Right ventricle myocardium superior (tissue), 1 donor: ENCODE measurements at regions of chr7 and their contacts with region 1.

Region 1: GRCh38 chr7:151315038-151315655 is 26.5 kb upstream of the NUB1 start:
- DNase-seq: peak; percentile 48
- ATAC-seq: peak; percentile 86

Region 2: DNA sequence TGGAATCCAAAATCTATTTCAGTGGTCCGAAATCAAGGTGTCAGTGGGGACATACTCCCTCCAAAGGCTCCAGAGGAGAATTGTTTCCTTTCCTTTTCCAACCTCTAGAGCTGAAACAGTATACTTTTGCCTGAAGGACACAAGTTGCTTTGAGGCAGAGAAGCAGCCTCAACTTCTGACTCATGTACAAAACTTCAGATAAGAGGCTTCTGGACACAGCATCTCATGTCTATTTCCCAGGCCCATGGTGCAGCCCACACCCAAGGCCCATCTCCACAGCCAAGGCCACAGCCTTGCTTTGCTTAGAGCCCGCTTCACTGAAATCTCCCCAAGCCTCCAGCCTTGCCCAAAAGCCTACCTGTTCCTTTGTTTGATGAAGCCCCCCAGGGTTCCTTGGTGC is 1610.6 kb before region 1 on chr7:
- intact Hi-C with region 1: no loop called
- DNase-seq: no peak
- ATAC-seq: no peak

Region 3: GRCh38 chr7:151351027-151351426 is 35.9 kb after region 1 on chr7:
- intact Hi-C with region 1: loop called (anchors 2 kb)
- DNase-seq: no peak
- ATAC-seq: no peak

Region 4: DNA sequence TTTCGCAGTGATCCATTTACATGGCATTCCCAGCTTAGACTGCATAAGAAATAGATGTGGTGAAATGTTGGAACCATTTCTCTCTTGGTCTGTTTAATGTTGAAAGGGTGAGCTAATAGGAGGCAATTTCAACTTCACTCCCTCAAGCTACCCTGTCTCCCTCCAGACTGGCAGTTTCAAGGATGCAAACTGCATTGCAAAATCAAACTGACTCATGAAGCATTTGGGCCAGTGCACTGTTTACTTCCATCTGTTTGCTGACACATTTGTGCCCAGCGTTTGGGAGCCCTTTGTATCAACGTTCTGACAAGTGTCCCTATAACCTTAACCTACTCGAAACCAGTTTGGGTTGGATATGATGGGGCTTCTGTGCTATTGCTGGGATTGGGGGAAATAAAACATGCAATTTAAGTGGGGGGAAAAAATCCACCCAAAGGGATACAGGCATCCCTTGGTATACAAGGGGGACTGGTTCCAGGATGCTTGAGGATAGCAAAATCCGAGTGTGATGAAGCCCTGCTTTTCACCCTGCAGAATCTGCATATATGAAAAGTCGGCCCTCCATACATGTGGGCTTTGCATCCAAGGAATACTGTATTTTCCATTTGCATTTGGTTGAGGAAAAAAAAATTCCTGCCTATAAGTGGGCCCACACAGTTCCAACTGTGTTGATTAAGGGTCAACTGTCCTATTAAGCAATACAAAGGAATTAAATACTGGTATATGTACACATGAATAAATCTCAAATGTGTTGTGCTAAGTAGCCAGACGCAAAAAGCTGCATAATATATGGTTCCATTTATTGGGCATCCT is 189.0 kb after region 1 on chr7:
- intact Hi-C with region 1: no loop called
- DNase-seq: no peak
- ATAC-seq: peak; percentile 82